ENCODE measurements at regions of chr1 and their contacts with region 1.

Region 1: DNA sequence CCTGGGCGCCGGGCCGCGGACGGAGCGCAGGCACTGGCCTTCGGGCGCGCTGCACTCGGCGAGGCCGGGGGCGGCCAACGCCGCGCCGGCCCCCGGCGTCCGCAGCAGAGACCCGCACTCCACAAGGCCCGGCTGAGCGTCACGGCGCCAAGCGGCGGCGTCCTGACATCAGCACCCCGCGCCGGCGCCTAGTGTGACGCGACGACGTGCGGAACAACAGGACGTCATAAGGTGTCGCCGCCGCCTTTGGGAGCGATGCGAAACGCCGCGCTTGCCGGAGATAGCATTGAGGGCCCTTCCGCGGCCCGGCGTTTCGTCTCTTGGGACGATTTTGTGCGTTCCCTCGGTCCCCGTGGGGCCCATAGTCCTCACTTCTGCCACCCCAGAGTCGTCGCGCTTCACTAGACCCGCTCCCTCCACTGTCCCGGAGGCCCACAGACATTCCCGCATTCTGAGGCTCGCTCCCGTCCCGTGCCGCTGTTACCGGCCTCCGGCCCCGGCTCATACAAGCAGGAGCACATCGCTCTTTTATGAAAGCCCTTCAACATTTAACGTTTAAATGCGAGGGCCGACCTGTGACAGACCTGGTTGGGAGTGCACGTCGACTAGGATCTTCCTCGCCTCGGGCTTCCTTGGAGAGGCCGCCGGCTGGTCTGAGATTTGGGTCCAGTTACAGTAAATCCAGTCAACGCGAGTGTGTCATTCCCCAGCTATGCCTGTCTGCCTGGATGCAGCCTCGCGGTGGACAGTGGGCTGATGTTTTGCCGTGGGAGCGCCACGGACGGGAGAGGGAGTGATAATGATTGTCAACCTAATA is at the start of gene SSU72:
- DNase-seq: peak; percentile 89 to 97 (median 91)
- ATAC-seq: peak; percentile 78
- H3K4me3 ChIP-seq: peak within 1 kb of the TSS; percentile 85
- H3K4me3 Mint-ChIP-seq: peak within 1 kb of the TSS; percentile 98
- H3K27ac ChIP-seq: peak within 1 kb of the TSS; percentile 98 to 99
- H3K27ac Mint-ChIP-seq: peak within 1 kb of the TSS; percentile 100
- H3K4me1 ChIP-seq: peaks cover 54% of the 10 kb centered on the region
- H3K4me1 Mint-ChIP-seq: peaks cover 36% of the 10 kb centered on the region
- H3K27me3 ChIP-seq: no peaks in the 10 kb centered on the region
- H3K27me3 Mint-ChIP-seq: no peaks in the 10 kb centered on the region
- CTCF ChIP-seq: no peak
- total RNA-seq, gene SSU72: 95.4 to 101 TPM

Region 2: GRCh38 chr1:1471389-1472052 is 103.4 kb before region 1 on chr1 and contains the start of gene ATAD3B:
- CTCF ChIA-PET with region 1: no interaction called
- POLR2A ChIA-PET with region 1: no interaction called
- intact Hi-C with region 1: loop called in 1 of 2 experiments (anchors 2 kb)
- DNase-seq: peak; percentile 76 to 95 (median 88)
- ATAC-seq: peak; percentile 92
- H3K4me3 ChIP-seq: peak within 1 kb of the TSS; percentile 71
- H3K4me3 Mint-ChIP-seq: peak within 1 kb of the TSS; percentile 95
- H3K27ac ChIP-seq: peak within 1 kb of the TSS; percentile 37 to 67
- H3K27ac Mint-ChIP-seq: peak within 1 kb of the TSS; percentile 87
- H3K4me1 ChIP-seq: peaks cover 27% of the 10 kb centered on the region
- H3K4me1 Mint-ChIP-seq: peaks cover 26% of the 10 kb centered on the region
- H3K27me3 ChIP-seq: no peaks in the 10 kb centered on the region
- H3K27me3 Mint-ChIP-seq: no peaks in the 10 kb centered on the region
- CTCF ChIP-seq: no peak
- total RNA-seq, gene ATAD3B: 44.3 to 49.1 TPM

Region 3: DNA sequence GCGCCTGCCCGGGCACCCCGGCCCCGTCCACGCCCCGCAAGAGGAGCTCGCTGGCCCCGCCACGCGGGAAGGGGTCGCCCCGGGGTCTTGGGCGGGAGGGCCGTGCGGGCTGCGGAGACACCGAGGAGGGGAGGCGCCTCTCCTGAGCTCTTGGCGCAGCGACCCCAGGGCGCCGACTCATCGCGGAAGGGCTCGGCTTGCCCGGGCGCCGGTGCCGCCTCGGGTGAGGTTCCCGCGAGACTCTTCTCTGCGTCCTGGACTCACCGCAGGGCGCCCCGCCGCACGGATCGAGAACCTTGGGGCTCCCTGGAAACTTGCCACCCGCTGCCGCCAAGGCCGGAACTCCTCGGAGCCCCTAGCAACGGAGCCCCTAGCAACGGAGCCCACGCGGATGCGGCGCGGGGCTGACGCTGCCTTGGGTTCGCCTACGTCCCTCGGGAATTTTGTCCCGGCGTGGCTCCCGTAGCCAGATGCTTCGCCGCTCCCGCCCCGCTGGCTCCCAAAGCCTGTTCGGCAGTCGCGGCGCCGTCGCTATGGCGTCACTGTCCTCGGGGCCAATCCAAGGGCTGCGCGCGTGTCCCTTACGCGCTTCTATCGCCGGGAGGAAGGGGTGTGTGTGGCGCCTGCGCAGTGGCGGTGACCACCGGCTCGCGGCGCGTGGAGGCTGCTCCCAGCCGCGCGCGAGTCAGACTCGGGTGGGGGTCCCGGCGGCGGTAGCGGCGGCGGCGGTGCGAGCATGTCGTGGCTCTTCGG is 63.2 kb before region 1 on chr1 and contains the start of gene ATAD3A:
- CTCF ChIA-PET with region 1: no interaction called
- POLR2A ChIA-PET with region 1: no interaction called
- intact Hi-C with region 1: loop called in 1 of 2 experiments (anchors 1 kb)
- DNase-seq: peak; percentile 88 to 98 (median 94)
- ATAC-seq: peak; percentile 92
- H3K4me3 ChIP-seq: peak within 1 kb of the TSS; percentile 71
- H3K4me3 Mint-ChIP-seq: peak within 1 kb of the TSS; percentile 99
- H3K27ac ChIP-seq: peak within 1 kb of the TSS; percentile 79 to 88
- H3K27ac Mint-ChIP-seq: peak within 1 kb of the TSS; percentile 95
- H3K4me1 ChIP-seq: peaks cover 16% of the 10 kb centered on the region
- H3K4me1 Mint-ChIP-seq: peaks cover 14% of the 10 kb centered on the region
- H3K27me3 ChIP-seq: no peaks in the 10 kb centered on the region
- H3K27me3 Mint-ChIP-seq: no peaks in the 10 kb centered on the region
- CTCF ChIP-seq: no peak
- total RNA-seq, gene ATAD3A: 17.0 to 19.5 TPM

Region 4: GRCh38 chr1:1630271-1630964 is 55.5 kb after region 1 on chr1:
- CTCF ChIA-PET with region 1: no interaction called
- POLR2A ChIA-PET with region 1: interaction called, 18 read pairs
- intact Hi-C with region 1: no loop called
- DNase-seq: peak; percentile 87 to 99 (median 94)
- ATAC-seq: peak; percentile 71
- H3K4me3 ChIP-seq: peak overlapping the region; percentile 20
- H3K4me3 Mint-ChIP-seq: peak overlapping the region; percentile 96
- H3K27ac ChIP-seq: peak overlapping the region in 1 of 2 donors; percentile 46
- H3K27ac Mint-ChIP-seq: peak overlapping the region; percentile 96
- H3K4me1 ChIP-seq: peaks cover 36% of the 10 kb centered on the region
- H3K4me1 Mint-ChIP-seq: peaks cover 9% of the 10 kb centered on the region
- H3K27me3 ChIP-seq: peaks cover 0 to 2% of the 10 kb centered on the region in 2 experiments
- H3K27me3 Mint-ChIP-seq: peaks cover 5% of the 10 kb centered on the region
- CTCF ChIP-seq: no peak

Region 5: GRCh38 chr1:1721201-1721600 is 146.3 kb after region 1 on chr1:
- CTCF ChIA-PET with region 1: no interaction called
- POLR2A ChIA-PET with region 1: no interaction called
- intact Hi-C with region 1: loop called in 1 of 2 experiments (anchors 5 kb)
- DNase-seq: no peak
- ATAC-seq: no peak
- H3K4me3 ChIP-seq: no peak overlapping the region
- H3K4me3 Mint-ChIP-seq: peak overlapping the region; percentile 62
- H3K27ac ChIP-seq: no peak overlapping the region
- H3K27ac Mint-ChIP-seq: no peak overlapping the region
- H3K4me1 ChIP-seq: peaks cover 6% of the 10 kb centered on the region
- H3K4me1 Mint-ChIP-seq: peaks cover 13% of the 10 kb centered on the region
- H3K27me3 ChIP-seq: no peaks in the 10 kb centered on the region
- H3K27me3 Mint-ChIP-seq: no peaks in the 10 kb centered on the region
- CTCF ChIP-seq: no peak

Region 6: DNA sequence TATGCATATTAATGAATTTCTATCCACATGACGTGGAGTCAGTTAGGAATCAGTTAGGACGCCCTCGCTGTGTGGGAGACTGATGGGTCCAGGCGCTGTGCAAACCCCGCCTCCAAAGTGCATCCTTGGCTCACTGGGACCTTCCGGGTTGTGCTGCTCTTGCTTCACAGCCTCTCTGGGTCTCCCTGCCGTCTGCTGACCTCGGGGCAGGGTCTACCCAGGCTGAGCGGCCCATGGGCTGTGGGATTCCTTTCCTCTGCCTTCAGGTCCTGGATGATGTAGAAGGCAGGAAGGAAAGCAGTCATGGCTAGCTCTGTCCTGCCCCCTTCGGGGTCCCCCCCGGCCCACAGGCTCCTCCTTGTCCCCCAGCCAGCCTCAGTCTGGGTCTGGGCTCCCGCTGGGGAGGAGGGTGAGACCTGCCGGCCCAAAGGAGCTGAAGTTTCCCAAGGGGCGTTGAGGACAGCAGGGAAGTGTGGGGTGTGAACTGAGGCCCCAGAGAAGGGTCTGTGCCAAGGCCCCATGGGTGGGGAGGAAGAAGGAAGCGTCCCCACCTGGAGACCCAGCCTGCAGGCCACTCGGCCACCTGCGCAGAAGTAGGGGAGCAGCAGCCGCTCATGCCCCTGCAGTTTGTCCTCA is 173.9 kb after region 1 on chr1:
- CTCF ChIA-PET with region 1: no interaction called
- POLR2A ChIA-PET with region 1: no interaction called
- intact Hi-C with region 1: no loop called
- DNase-seq: peak in 1 of 14 experiments; percentile 35
- ATAC-seq: no peak
- H3K4me3 ChIP-seq: no peak overlapping the region
- H3K4me3 Mint-ChIP-seq: peak overlapping the region; percentile 23
- H3K27ac ChIP-seq: no peak overlapping the region
- H3K27ac Mint-ChIP-seq: peak overlapping the region; percentile 44
- H3K4me1 ChIP-seq: no peaks in the 10 kb centered on the region
- H3K4me1 Mint-ChIP-seq: no peaks in the 10 kb centered on the region
- H3K27me3 ChIP-seq: no peaks in the 10 kb centered on the region
- H3K27me3 Mint-ChIP-seq: no peaks in the 10 kb centered on the region
- CTCF ChIP-seq: no peak

Region 7: GRCh38 chr1:1873186-1873585 is 298.3 kb after region 1 on chr1:
- CTCF ChIA-PET with region 1: no interaction called
- POLR2A ChIA-PET with region 1: no interaction called
- intact Hi-C with region 1: no loop called
- DNase-seq: no peak
- ATAC-seq: no peak
- H3K4me3 ChIP-seq: no peak overlapping the region
- H3K4me3 Mint-ChIP-seq: no peak overlapping the region
- H3K27ac ChIP-seq: no peak overlapping the region
- H3K27ac Mint-ChIP-seq: peak overlapping the region; percentile 63
- H3K4me1 ChIP-seq: peaks cover 84% of the 10 kb centered on the region
- H3K4me1 Mint-ChIP-seq: peaks cover 82% of the 10 kb centered on the region
- H3K27me3 ChIP-seq: no peaks in the 10 kb centered on the region
- H3K27me3 Mint-ChIP-seq: no peaks in the 10 kb centered on the region
- CTCF ChIP-seq: no peak